ENCODE measurements at regions of chr14 and their contacts with region 1.

Region 1: GRCh38 chr14:50099335-50099734 is 17.0 kb downstream of the VCPKMT start:
- DNase-seq: peak in 1 of 5 donors; percentile 25
- H3K4me3 ChIP-seq: no peak overlapping the region
- H3K4me3 Mint-ChIP-seq: peak overlapping the region in 5 of 8 donors; percentile 7 to 38 (median 28)
- H3K27ac ChIP-seq: no peak overlapping the region
- H3K27ac Mint-ChIP-seq: peak overlapping the region; percentile 10 to 92 (median 80)
- H3K4me1 ChIP-seq: peaks cover 69% of the 10 kb centered on the region
- H3K4me1 Mint-ChIP-seq: peaks cover 41 to 68% (median 54%) of the 10 kb centered on the region in 4 donors
- H3K27me3 ChIP-seq: no peaks in the 10 kb centered on the region
- H3K27me3 Mint-ChIP-seq: no peaks in the 10 kb centered on the region

Region 2: DNA sequence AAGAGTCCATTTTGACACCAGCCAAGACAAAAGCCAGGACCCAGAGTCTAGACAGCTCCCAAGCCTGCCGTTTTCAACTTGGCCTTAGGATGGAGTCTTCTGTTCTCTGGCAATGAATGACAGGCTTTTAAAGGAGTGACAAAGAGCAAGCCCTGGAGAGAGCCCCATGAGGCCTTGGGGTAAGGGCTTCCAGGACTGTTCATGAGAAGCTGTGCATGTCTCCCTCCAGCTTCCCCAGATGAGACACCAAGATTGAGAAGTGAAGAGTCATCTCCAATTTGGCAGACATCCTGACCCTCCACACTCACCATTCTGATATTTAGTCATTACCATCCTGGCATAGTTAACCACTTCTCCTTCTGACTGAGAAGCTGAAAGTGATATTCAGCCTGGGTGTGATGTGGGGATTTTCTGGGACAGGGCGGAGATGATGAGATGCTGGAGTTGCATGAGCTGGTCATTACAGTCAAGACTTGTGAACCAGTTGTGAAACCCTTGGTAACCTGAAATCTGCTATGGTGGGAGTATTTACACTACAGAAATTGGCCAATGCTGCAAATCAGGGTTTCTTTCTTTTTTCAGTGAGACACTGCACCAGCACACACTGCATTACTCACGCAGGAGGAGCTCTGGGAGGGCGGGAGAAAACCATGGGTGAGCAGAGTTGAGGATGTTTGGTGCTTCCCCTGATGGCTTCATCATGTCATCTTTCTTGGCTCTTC is 60.8 kb before region 1 on chr14:
- CTCF ChIA-PET with region 1: interaction called, 9 read pairs
- POLR2A ChIA-PET with region 1: interaction called, 16 read pairs
- intact Hi-C with region 1: no loop called
- DNase-seq: peak in 2 of 5 donors; percentile 10 to 63
- H3K4me3 ChIP-seq: no peak overlapping the region
- H3K4me3 Mint-ChIP-seq: peak overlapping the region in 7 of 8 donors; percentile 37 to 92 (median 73)
- H3K27ac ChIP-seq: peak overlapping the region; percentile 28
- H3K27ac Mint-ChIP-seq: peak overlapping the region; percentile 81 to 96 (median 93)
- H3K4me1 ChIP-seq: peaks cover 59% of the 10 kb centered on the region
- H3K4me1 Mint-ChIP-seq: peaks cover 38 to 71% (median 57%) of the 10 kb centered on the region in 4 donors
- H3K27me3 ChIP-seq: no peaks in the 10 kb centered on the region
- H3K27me3 Mint-ChIP-seq: no peaks in the 10 kb centered on the region

Region 3: GRCh38 chr14:50148799-50149198 is 49.5 kb after region 1 on chr14:
- CTCF ChIA-PET with region 1: no interaction called
- POLR2A ChIA-PET with region 1: no interaction called
- intact Hi-C with region 1: no loop called
- DNase-seq: no peak
- H3K4me3 ChIP-seq: no peak overlapping the region
- H3K4me3 Mint-ChIP-seq: no peak overlapping the region
- H3K27ac ChIP-seq: no peak overlapping the region
- H3K27ac Mint-ChIP-seq: no peak overlapping the region
- H3K4me1 ChIP-seq: no peaks in the 10 kb centered on the region
- H3K4me1 Mint-ChIP-seq: no peaks in the 10 kb centered on the region
- H3K27me3 ChIP-seq: no peaks in the 10 kb centered on the region
- H3K27me3 Mint-ChIP-seq: no peaks in the 10 kb centered on the region

Measured in CD4-positive, alpha-beta memory T cell (primary cell).